Activated B cell treated with CpG ODN at 0.5 μM for 24 hours (primary cell): ENCODE measurements at regions of chr4 and their contacts with region 1.

Region 1: GRCh38 chr4:159102622-159103383 is at the start of gene RAPGEF2:
- DNase-seq: peak; percentile 85
- ATAC-seq: peak; percentile 83
- H3K4me3 Mint-ChIP-seq: peak within 1 kb of the TSS; percentile 84
- H3K27ac Mint-ChIP-seq: peak within 1 kb of the TSS; percentile 79
- H3K4me1 Mint-ChIP-seq: peaks cover 35% of the 10 kb centered on the region
- H3K27me3 Mint-ChIP-seq: peaks cover 1% of the 10 kb centered on the region
- CTCF ChIP-seq: no peak
- total RNA-seq, gene RAPGEF2: 18.1 and 22.9 TPM in 2 replicates

Region 2: GRCh38 chr4:158671915-158672806 is 430.6 kb before region 1 on chr4 and contains the start of gene ETFDH:
- CTCF ChIA-PET with region 1: no interaction called
- POLR2A ChIA-PET with region 1: interaction called, 4 read pairs
- intact Hi-C with region 1: loop called (anchors 1 kb)
- DNase-seq: peak; percentile 95
- ATAC-seq: peak; percentile 83
- H3K4me3 Mint-ChIP-seq: peak within 1 kb of the TSS; percentile 98
- H3K27ac Mint-ChIP-seq: peak within 1 kb of the TSS; percentile 96
- H3K4me1 Mint-ChIP-seq: peaks cover 23% of the 10 kb centered on the region
- H3K27me3 Mint-ChIP-seq: no peaks in the 10 kb centered on the region
- CTCF ChIP-seq: no peak
- total RNA-seq, gene ETFDH: 12.0 and 15.4 TPM in 2 replicates

Region 3: DNA sequence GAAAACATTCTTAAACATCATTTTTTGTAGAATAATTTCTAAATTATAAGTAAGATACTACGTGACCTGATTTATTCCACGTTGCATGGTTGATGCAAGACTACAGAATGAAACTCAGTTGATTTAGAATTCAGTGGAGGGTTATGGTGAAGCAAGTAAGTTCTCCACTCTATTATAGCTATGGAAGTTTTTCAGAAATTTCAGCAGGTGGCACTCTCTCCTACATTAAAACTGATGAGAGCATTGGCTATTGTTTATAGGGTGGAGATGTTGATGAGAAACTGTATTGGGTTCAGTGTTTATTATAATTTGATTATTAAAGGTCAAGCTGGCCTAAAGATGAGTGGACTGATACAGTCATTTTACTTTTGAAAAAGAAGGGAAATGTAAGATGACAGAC is 246.0 kb before region 1 on chr4:
- CTCF ChIA-PET with region 1: no interaction called
- POLR2A ChIA-PET with region 1: no interaction called
- intact Hi-C with region 1: loop called (anchors 2 kb)
- DNase-seq: no peak
- ATAC-seq: peak; percentile 72
- H3K4me3 Mint-ChIP-seq: no peak overlapping the region
- H3K27ac Mint-ChIP-seq: no peak overlapping the region
- H3K4me1 Mint-ChIP-seq: peaks cover 3% of the 10 kb centered on the region
- H3K27me3 Mint-ChIP-seq: peaks cover 20% of the 10 kb centered on the region
- CTCF ChIP-seq: peak; percentile 66

Region 4: GRCh38 chr4:159018062-159018629 is 84.7 kb before region 1 on chr4:
- CTCF ChIA-PET with region 1: no interaction called
- POLR2A ChIA-PET with region 1: no interaction called
- intact Hi-C with region 1: loop called (anchors 2 kb)
- DNase-seq: peak; percentile 39
- ATAC-seq: peak; percentile 91
- H3K4me3 Mint-ChIP-seq: peak overlapping the region; percentile 39
- H3K27ac Mint-ChIP-seq: no peak overlapping the region
- H3K4me1 Mint-ChIP-seq: peaks cover 16% of the 10 kb centered on the region
- H3K27me3 Mint-ChIP-seq: peaks cover 12% of the 10 kb centered on the region
- CTCF ChIP-seq: no peak

Region 5: DNA sequence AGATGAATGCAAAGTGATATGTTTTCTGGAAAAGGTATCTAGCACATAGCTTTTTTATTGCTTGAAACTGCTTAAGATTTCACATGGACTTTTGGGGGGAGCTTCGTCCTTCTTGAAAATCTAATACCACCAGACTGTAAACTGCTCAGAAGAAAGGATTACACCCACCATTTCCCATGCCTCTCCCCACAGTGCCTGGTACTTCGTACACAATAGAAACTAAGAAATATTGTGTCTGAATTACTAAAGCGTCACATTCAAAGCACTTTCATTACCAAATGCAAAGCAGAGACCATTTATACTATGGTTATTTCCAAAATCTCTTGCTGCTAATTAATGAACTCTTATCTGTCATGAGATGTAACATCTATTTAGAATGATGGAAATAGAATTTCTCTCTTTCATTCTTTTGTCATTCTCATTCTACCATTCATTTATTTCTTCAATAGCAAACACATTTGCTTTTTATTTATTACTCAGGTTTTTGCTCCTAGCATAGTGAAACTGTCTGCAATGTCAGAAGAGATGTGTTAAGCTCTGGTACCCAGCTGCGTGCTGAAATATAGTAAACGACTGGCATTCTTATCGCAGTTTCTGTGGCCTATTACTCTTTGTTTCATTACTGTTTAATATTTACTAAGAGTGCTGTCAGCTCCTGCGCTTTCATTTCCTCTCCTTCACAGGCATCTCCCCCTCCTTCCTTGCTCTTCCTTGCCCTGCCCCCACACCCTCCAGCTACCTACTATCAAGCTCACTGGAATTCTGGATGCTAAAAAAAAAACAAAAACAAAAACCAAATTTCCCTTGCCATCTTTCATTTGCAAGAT is 51.3 kb before region 1 on chr4:
- CTCF ChIA-PET with region 1: no interaction called
- POLR2A ChIA-PET with region 1: interaction called, 3 read pairs
- intact Hi-C with region 1: loop called (anchors 1 kb)
- DNase-seq: no peak
- ATAC-seq: peak; percentile 51
- H3K4me3 Mint-ChIP-seq: peak overlapping the region; percentile 56
- H3K27ac Mint-ChIP-seq: peak overlapping the region; percentile 63
- H3K4me1 Mint-ChIP-seq: peaks cover 19% of the 10 kb centered on the region
- H3K27me3 Mint-ChIP-seq: peaks cover 40% of the 10 kb centered on the region
- CTCF ChIP-seq: no peak

Region 6: DNA sequence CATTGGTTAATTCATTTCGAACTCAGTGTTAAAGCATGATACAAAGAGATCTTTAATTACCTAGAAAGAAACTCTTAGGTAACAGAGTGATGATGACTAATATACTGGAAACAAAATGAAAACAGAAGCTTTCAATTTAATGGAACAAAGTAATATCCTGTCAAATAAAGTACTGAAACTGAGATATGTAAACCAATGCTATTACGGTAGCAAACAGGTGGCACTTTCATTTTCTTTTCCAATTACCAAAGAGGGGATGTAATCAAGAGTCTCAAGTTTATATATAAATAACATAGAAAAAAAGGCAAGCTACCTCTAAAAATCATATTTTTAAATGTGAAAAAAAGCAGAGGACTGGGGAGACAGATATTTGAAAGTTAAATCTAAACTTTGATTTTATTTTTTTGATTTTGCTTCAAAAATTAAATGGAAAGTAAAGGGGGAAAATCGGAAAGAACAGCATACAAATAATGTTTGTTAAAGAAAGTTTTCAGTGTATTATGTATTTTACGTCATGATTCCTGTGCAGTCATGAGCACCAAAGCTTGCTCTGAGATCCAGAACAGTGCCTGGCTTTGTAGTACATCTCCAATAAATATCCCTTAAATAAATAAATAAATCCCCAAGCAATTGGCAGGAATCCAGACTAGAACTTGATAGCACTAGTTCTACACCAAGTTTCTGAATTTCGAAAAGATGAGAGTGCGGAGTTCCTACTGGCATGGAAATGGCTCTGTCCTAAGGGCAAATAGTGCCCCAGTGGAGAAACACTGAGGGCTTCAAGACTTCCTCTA is 24.9 kb before region 1 on chr4:
- CTCF ChIA-PET with region 1: no interaction called
- POLR2A ChIA-PET with region 1: no interaction called
- intact Hi-C with region 1: loop called (anchors 1 kb)
- DNase-seq: no peak
- ATAC-seq: peak; percentile 91
- H3K4me3 Mint-ChIP-seq: peak overlapping the region; percentile 73
- H3K27ac Mint-ChIP-seq: peak overlapping the region; percentile 63
- H3K4me1 Mint-ChIP-seq: peaks cover 23% of the 10 kb centered on the region
- H3K27me3 Mint-ChIP-seq: no peaks in the 10 kb centered on the region
- CTCF ChIP-seq: no peak

Region 7: GRCh38 chr4:159117968-159118367 is 15.2 kb after region 1 on chr4:
- CTCF ChIA-PET with region 1: no interaction called
- POLR2A ChIA-PET with region 1: interaction called, 10 read pairs
- intact Hi-C with region 1: no loop called
- DNase-seq: no peak
- ATAC-seq: no peak
- H3K4me3 Mint-ChIP-seq: no peak overlapping the region
- H3K27ac Mint-ChIP-seq: no peak overlapping the region
- H3K4me1 Mint-ChIP-seq: peaks cover 13% of the 10 kb centered on the region
- H3K27me3 Mint-ChIP-seq: no peaks in the 10 kb centered on the region
- CTCF ChIP-seq: no peak

Region 8: GRCh38 chr4:159685340-159686092 is 582.7 kb after region 1 on chr4:
- CTCF ChIA-PET with region 1: no interaction called
- POLR2A ChIA-PET with region 1: no interaction called
- intact Hi-C with region 1: no loop called
- DNase-seq: no peak
- ATAC-seq: no peak
- H3K4me3 Mint-ChIP-seq: no peak overlapping the region
- H3K27ac Mint-ChIP-seq: no peak overlapping the region
- H3K4me1 Mint-ChIP-seq: no peaks in the 10 kb centered on the region
- H3K27me3 Mint-ChIP-seq: no peaks in the 10 kb centered on the region
- CTCF ChIP-seq: no peak